Activated CD8-positive, alpha-beta T cell treated with anti-CD3 and anti-CD28 coated beads, Interleukin-2, amount 10 ng/mL, durations not matched to agents 7 days and 5 days (primary cell): ENCODE measurements at regions of chr1 and their contacts with region 1.

Region 1: GRCh38 chr1:51192213-51192843 is 43.7 kb upstream of the RNF11 start:
- DNase-seq: peak; percentile 73
- ATAC-seq: peak; percentile 49
- H3K4me3 Mint-ChIP-seq: no peak overlapping the region
- H3K27ac Mint-ChIP-seq: no peak overlapping the region
- H3K4me1 Mint-ChIP-seq: no peaks in the 10 kb centered on the region
- H3K27me3 Mint-ChIP-seq: peaks cover 4% of the 10 kb centered on the region

Region 2: GRCh38 chr1:50873458-50874187 is 318.7 kb before region 1 on chr1:
- CTCF ChIA-PET with region 1: interaction called, 18 read pairs
- POLR2A ChIA-PET with region 1: no interaction called
- DNase-seq: peak; percentile 79
- ATAC-seq: peak; percentile 73
- H3K4me3 Mint-ChIP-seq: no peak overlapping the region
- H3K27ac Mint-ChIP-seq: no peak overlapping the region
- H3K4me1 Mint-ChIP-seq: no peaks in the 10 kb centered on the region
- H3K27me3 Mint-ChIP-seq: no peaks in the 10 kb centered on the region

Region 3: GRCh38 chr1:50978144-50978851 is 214.0 kb before region 1 on chr1:
- CTCF ChIA-PET with region 1: interaction called, 10 read pairs
- POLR2A ChIA-PET with region 1: no interaction called
- DNase-seq: peak; percentile 56
- ATAC-seq: peak; percentile 62
- H3K4me3 Mint-ChIP-seq: peak overlapping the region; percentile 91
- H3K27ac Mint-ChIP-seq: peak overlapping the region; percentile 86
- H3K4me1 Mint-ChIP-seq: peaks cover 42% of the 10 kb centered on the region
- H3K27me3 Mint-ChIP-seq: peaks cover 14% of the 10 kb centered on the region

Region 4: DNA sequence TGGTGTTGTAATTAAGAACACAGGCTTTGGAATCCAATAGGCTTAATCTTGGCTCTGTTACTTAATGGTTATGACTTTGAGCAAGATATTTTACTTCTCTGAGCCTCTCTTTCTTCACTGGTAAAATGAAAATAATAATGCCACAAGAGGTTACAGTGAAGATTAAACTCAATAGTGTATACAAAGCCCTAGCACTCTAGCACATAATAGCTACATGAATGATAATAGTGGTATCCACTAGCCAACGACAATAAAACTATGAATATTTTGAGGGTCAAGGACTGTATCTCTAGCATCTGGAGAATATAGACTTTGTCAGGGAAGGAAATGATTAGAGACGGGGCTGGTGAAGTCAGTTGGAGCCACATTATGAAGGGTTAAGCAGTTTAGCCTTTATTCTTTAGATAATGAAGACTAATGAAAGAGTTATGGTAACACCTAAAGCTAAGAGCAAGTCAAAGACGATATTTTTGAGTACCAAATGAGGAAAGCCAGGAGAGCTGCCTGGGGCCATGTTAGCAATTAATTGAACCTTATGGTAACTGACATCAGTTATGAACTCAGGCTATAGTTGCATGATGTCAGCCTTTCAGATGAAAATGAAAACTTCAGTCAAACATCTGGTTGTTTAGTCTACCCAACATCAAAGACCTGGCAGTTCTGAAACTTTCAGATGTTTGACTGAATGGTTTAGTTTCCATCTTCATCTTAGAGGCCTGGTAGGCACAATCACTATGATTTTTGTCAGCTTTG is 11.0 kb after region 1 on chr1:
- CTCF ChIA-PET with region 1: interaction called, 13 read pairs
- POLR2A ChIA-PET with region 1: interaction called, 3 read pairs
- DNase-seq: no peak
- ATAC-seq: no peak
- H3K4me3 Mint-ChIP-seq: no peak overlapping the region
- H3K27ac Mint-ChIP-seq: no peak overlapping the region
- H3K4me1 Mint-ChIP-seq: no peaks in the 10 kb centered on the region
- H3K27me3 Mint-ChIP-seq: no peaks in the 10 kb centered on the region

Region 5: DNA sequence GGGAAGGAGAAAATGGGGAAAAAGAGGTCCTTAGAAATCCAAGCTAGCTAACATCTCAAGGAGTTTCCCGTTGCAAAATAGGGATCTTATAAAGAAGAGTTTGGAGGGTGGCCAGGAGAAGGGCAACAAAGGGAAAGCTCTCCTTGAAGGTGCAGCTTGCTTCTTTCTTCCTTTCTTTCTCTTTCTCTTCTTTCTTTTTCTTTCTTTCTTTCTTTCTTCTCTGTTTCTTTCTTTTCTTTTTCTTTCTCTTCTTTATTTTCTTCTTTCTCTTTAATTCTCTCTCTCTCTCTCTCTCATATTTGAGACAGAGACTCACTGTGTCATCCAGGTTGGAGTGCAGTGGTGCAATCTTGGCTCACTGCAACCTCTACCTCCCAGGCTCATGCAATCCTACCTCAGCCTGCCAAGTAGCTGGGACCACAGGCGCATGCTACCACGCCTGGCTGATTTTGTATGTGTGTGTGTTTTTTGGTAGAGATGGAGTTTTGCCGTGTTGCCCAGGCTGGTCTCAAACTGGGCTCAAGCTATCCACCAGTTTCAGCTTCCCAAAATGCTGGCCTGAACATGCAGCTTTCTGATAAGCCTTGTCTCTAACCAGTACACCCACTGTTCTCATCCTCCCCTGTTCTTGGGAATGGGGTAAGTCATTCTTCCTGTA is 88.1 kb after region 1 on chr1:
- CTCF ChIA-PET with region 1: no interaction called
- POLR2A ChIA-PET with region 1: no interaction called
- DNase-seq: no peak
- ATAC-seq: no peak
- H3K4me3 Mint-ChIP-seq: no peak overlapping the region
- H3K27ac Mint-ChIP-seq: no peak overlapping the region
- H3K4me1 Mint-ChIP-seq: peaks cover 12% of the 10 kb centered on the region
- H3K27me3 Mint-ChIP-seq: no peaks in the 10 kb centered on the region

Region 6: GRCh38 chr1:51421964-51422363 is 229.6 kb after region 1 on chr1:
- CTCF ChIA-PET with region 1: no interaction called
- POLR2A ChIA-PET with region 1: no interaction called
- DNase-seq: no peak
- ATAC-seq: no peak
- H3K4me3 Mint-ChIP-seq: no peak overlapping the region
- H3K27ac Mint-ChIP-seq: no peak overlapping the region
- H3K4me1 Mint-ChIP-seq: no peaks in the 10 kb centered on the region
- H3K27me3 Mint-ChIP-seq: no peaks in the 10 kb centered on the region